Activated naive CD4-positive, alpha-beta T cell treated with anti-CD3 and anti-CD28 coated beads, Interleukin-2, amount 10 ng/mL, durations not matched to agents 7 days and 5 days (primary cell): ENCODE measurements at regions of chr12 and their contacts with region 1.

Region 1: GRCh38 chr12:71846322-71846940 is 6.9 kb downstream of the TBC1D15 start:
- DNase-seq: no peak
- H3K4me3 Mint-ChIP-seq: no peak overlapping the region
- H3K27ac Mint-ChIP-seq: no peak overlapping the region
- H3K4me1 Mint-ChIP-seq: peaks cover 18% of the 10 kb centered on the region
- H3K27me3 Mint-ChIP-seq: no peaks in the 10 kb centered on the region

Region 2: GRCh38 chr12:71780237-71780822 is 66.1 kb before region 1 on chr12:
- CTCF ChIA-PET with region 1: interaction called, 31 read pairs
- DNase-seq: peak; percentile 58
- H3K4me3 Mint-ChIP-seq: no peak overlapping the region
- H3K27ac Mint-ChIP-seq: no peak overlapping the region
- H3K4me1 Mint-ChIP-seq: peaks cover 4% of the 10 kb centered on the region
- H3K27me3 Mint-ChIP-seq: no peaks in the 10 kb centered on the region

Region 3: GRCh38 chr12:71828810-71829209 is 17.6 kb before region 1 on chr12:
- CTCF ChIA-PET with region 1: no interaction called
- DNase-seq: no peak
- H3K4me3 Mint-ChIP-seq: no peak overlapping the region
- H3K27ac Mint-ChIP-seq: no peak overlapping the region
- H3K4me1 Mint-ChIP-seq: no peaks in the 10 kb centered on the region
- H3K27me3 Mint-ChIP-seq: peaks cover 8% of the 10 kb centered on the region